ENCODE measurements at regions of chr7 and their contacts with region 1.

Region 1: DNA sequence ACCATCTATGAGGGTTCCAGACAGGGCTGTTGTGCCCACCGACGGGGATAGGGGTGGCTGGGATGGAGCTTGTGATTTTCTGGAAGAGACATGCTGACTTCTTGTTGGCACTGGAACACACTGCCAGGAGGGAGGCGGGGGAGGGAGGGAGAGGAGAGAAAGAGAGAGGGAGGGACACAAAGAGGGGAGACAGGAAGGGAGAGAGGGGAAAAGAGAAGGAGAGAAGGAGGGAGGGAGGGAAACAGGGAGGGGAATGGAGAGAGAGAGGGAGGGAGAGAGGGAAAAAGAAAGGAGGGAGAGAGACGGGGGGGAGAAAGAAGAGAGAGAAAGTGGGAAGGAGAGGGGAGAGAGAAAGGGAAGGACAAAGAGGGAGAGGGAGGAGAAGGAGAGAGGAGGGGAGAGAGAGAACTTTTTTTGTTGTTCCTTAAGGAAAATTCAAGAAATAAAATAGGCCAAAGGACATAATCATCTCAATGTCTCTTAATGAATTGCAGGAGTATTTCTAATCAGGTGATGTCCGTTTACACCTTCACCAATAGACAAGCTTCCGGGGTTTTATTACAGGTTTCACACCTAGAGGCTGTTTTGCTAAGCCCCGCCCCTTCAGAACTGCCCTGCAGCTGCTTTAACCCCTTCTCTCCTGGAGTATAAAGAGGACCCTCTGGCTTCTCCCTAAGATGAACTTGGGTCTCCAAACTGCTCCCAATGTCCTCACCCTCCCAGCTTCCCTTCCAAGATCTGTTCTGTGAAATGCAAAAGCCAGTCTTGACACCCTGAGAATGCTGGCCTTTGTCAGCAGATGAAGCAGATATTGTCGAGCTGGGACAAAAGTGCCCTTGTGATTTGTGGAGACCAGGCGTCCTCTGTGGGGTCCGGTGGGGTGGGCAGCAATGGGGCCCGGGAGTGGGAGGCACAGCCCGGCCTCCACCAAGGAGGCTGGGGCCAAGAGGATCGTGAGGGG is 82.0 kb upstream of the GTF2IRD1 start:
- DNase-seq: peak; percentile 19

Region 2: GRCh38 chr7:74284781-74285259 is 86.8 kb before region 1 on chr7:
- in situ Hi-C with region 1: loop called (anchors 5 kb)
- DNase-seq: no peak

Region 3: GRCh38 chr7:74709880-74710671 is 338.4 kb after region 1 on chr7:
- in situ Hi-C with region 1: no loop called
- DNase-seq: no peak